Dorsolateral prefrontal cortex (tissue), 120 donors: ENCODE measurements at regions of chr15 and their contacts with region 1.

Region 1: DNA sequence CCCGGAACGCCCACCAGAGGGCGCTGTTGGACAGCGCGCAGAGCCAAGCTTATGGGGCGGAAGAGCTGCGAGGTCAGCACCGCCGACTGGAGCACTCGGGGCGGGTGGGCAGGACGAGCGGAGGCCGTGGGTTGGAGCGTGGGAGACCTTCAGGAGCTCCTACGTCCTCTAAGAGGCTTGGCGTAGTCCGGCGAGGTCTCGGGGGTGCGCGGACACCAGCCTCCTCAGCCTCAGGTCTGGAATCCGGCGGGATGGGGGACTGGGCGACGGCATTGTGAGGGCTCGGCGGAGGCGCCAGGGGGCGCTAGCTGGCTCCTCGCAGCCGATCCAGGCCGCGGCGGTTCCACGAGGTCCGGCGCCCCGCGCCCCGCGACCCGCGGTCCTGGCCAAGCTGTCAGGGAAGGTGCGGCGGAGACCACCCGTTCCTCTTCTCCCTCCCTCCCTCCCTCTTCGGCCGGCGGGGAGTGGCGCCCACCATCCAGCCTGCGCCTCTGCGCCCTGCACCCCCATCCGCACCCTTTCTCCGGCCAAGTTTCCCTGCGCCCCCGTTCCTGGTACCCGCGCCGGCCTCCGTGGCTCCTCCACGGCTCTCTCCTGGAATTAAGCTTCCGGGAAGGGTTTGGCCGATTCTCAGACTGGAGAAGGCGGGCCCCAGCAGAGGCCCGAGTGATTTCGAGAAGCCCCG is 24.3 kb upstream of the POLG start:
- DNase-seq: peak in 9 of 10 donors; percentile 66 to 87 (median 72)
- H3K4me3 ChIP-seq: peak overlapping the region; percentile 36 to 76 (median 61)
- H3K27ac ChIP-seq: peak overlapping the region in 45 of 59 donors; percentile 4 to 94 (median 67)
- H3K27me3 ChIP-seq: peaks cover 0 to 45% (median 6%) of the 10 kb centered on the region in 45 donors
- CTCF ChIP-seq: peak; percentile 83 to 100 (median 99)

Region 2: DNA sequence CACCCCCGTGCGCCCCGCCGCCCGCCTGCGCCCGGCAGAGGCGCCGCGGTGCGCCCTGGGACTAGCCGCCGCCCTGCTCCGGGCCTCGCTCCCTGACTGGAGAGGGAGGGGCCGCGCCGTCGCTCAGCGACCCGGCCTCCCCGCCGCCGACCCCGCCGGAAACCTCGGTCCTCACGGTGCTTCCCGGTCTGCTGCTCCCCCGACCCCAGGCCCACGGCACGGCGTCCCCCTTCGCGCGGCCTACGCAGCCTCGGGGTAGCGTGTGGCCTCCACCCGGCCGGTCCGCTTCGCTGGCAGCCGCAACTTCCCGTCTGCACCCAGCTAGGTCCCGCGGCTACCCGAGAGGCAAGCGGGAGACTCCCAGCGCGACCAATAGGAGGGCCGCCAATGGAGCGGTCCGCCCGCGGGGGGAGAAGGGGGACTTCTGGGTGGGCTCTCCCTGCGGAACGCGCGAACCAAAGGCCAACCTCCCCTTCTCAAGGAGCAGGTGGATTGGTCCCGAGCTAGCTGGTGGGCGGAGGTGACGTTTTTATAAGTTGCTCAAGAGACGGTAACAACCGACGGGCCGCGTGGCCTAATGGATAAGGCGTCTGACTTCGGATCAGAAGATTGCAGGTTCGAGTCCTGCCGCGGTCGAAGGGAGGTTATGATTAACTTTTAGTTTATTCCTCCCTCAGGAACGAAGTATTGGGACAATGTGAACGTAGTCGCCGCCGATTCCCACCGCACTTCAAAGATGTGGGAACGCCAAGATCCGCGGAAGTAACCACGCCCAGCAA is 24.2 kb before region 1 on chr15 and contains the start of gene POLG:
- intact Hi-C with region 1: loop called in 1 of 2 experiments (anchors 2 kb)
- DNase-seq: peak; percentile 93 to 99 (median 98)
- H3K4me3 ChIP-seq: peak within 1 kb of the TSS; percentile 65 to 96 (median 88)
- H3K27ac ChIP-seq: peak within 1 kb of the TSS in 58 of 59 donors; percentile 33 to 93 (median 87)
- H3K27me3 ChIP-seq: no peaks in the 10 kb centered on the region
- CTCF ChIP-seq: peak in 21 of 56 donors; percentile 1 to 51 (median 22)
- total RNA-seq, gene POLG: 42.1 to 75.8 (median 58.1) TPM

Region 3: DNA sequence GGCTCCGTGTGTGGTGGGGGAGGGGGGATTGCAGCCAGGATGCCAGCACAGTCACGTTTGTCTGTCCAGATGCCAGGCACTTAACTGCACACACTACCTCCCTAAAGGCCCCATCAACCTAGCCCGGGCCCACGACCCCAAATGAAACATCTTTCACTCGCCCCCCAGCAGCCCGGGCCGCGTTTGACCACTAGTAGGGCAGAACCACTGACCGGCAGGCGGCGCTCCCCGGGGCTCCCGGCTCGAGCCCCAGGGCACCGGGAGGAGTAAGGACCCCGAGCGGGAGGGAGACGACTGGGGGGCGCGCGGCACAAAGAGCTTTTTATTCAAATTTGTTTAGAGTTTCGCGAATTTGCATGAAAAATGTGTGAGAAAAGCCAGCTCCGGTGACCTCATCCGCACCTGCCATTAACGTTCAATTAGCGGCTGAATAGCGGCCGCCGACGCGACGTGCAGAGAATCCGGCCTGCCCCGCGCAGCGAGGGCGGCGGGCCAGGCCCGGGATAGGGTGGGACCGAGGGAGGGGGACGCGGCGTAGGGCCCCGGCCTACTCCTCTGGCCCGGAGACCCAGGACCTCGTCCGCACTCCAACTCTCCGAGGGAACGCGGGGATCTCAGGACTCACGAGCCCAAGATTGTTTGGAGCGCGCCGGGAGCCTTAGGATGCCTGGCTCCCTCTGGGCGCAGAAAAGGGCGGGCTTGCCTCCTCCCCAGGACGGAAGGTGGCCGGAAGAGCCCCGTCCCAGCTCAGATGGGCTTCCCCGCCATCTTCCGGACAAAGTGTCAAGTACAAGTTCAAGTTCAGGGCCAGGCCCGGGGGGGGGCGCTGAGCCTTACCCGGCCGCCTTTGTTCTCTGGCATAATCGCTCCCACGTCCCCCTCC is 40.6 kb after region 1 on chr15:
- intact Hi-C with region 1: loop called in 1 of 2 experiments (anchors 5 kb)
- DNase-seq: peak in 2 of 10 donors; percentile 21 to 31
- H3K4me3 ChIP-seq: peak overlapping the region; percentile 6 to 69 (median 55)
- H3K27ac ChIP-seq: peak overlapping the region in 52 of 59 donors; percentile 28 to 88 (median 74)
- H3K27me3 ChIP-seq: peaks cover 0 to 64% (median 17%) of the 10 kb centered on the region in 45 donors
- CTCF ChIP-seq: peak in 50 of 56 donors; percentile 3 to 55 (median 36)

Region 4: DNA sequence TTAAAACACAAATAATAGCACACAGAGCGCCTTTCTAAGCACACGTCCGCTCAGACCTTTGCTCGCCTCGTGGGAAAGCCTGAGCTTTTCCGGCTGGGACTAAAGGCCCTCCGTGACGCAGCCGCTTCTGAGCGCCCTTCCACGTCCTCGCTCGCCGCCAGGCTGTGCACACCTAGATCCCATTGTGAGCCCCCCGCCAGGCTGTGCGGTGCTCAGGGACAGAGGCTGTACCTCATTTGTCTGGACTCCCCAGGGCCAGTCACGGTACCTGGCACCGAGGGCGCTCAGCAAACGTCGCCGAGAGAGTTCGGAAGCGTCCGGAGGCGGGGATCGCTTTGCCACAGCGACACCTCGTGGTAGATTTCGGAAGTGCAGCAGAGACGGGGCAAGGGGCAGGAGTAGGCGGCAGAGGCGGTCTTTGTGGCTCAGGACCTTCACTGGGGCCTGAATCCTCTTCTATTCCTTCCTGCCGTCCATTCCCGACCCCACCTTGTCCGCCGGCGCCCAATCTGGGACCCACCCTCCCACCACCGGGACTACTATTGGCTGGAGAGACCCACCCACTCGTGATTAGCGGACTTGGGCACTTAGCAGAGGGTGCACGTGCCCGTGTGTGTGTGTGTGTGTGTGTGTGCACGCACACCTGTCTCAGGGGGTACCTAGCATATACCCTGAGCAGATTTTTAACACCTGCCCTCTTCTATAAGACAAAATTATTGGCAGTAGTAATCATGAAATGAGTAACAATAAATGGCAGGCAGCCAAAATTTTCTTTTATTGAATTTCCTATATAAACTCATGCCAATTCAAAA is 71.8 kb after region 1 on chr15:
- intact Hi-C with region 1: loop called (anchors 1 kb)
- DNase-seq: peak; percentile 73 to 92 (median 89)
- H3K4me3 ChIP-seq: peak overlapping the region; percentile 29 to 84 (median 59)
- H3K27ac ChIP-seq: peak overlapping the region in 53 of 59 donors; percentile 3 to 93 (median 66)
- H3K27me3 ChIP-seq: no peaks in the 10 kb centered on the region
- CTCF ChIP-seq: peak; percentile 94 to 100 (median 99)

Region 5: DNA sequence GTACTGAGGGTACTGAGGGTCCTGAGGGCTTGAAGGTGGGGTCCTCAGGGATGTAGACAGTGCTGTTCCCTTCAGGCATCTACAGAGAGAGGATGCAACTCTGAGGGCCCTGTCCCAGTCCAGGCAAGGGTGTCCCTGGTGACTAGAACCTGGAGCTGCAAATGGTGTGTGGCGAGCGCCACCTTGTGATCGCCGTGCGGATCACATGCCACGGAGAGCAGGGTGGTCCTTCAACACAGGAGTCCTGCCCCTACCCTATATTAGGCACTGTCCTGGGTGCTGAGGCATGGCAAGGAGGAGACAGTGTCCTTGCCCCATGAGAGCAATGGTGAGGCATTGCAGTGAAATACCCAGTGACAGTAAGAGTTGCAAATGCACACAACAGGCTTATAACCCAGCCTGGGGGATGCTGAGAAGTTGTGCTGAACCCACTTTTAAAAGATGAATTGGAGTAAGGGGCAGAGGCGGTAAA is 113.9 kb after region 1 on chr15:
- intact Hi-C with region 1: loop called (anchors 2 to 5 kb)
- DNase-seq: peak in 9 of 10 donors; percentile 38 to 76 (median 57)
- H3K4me3 ChIP-seq: no peak overlapping the region
- H3K27ac ChIP-seq: no peak overlapping the region
- H3K27me3 ChIP-seq: peaks cover 0 to 20% (median 0%) of the 10 kb centered on the region in 45 donors
- CTCF ChIP-seq: peak in 55 of 56 donors; percentile 25 to 77 (median 67)

Region 6: DNA sequence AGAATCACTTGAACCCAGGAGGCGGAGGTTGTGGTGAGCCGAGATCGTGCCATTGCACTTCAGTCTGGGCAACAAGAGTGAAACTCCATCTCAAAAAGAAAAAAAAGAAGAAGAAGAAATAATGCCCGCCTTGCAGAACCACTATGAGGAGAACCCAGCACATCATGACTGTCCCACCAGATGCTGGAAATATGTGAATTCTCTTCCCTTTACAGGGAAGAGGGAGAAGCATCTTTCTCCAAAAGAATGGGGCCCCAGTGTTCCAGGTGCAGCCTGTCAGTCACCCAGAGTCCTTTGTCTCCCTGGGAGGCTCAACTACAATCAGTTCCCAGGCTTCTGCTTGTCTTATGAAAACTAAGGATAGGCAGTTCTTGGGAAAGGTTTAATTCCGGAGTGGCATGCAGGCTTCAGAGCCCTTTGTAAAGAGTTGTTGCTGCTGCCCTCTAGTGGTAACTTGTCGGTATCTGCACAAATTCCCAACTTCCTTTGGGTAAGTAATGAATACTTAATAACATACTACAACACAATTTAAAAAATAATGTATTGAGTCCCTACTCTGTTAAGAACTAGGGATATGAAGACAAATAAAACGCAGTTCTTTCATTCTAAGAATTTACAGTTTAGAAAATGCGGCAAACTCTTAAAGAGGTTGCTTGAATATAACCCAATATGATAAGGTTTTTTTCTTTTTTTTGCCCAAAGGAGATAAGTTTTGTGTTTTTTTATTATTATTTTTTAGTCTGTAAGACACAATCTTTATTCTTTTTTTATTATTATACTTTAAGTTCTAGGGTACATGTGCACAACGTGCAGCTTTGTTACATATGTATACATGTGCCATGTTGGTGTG is 197.7 kb after region 1 on chr15:
- intact Hi-C with region 1: loop called in 1 of 2 experiments (anchors 5 kb)
- DNase-seq: peak in 5 of 10 donors; percentile 24 to 74 (median 47)
- H3K4me3 ChIP-seq: no peak overlapping the region
- H3K27ac ChIP-seq: no peak overlapping the region
- H3K27me3 ChIP-seq: peaks cover 0 to 5% (median 0%) of the 10 kb centered on the region in 45 donors
- CTCF ChIP-seq: peak; percentile 65 to 89 (median 79)